CD4-positive, alpha-beta T cell (primary cell): ENCODE measurements at regions of chr15 and their contacts with region 1.

Region 1: DNA sequence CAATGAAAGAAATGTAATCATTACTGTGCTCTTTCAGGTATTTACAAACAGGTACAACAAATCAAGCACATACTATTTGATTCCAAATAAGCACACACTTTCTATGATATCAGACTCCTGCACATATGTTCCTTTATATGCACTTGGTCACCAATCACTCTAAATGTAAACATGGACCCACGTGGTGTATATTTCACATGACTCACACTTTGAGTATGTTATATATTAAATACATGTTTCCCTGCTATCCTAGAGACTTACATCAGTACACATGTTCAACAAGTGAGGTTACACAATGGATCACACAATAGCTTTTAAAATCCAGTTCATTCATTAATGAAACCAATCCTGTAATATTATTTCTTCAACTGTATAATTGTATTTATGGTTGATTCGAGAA is 683.5 kb downstream of the NR2F2 start:
- DNase-seq: no peak
- ATAC-seq: no peak
- H3K4me3 ChIP-seq: no peak overlapping the region
- H3K4me3 Mint-ChIP-seq: no peak overlapping the region
- H3K27ac ChIP-seq: no peak overlapping the region
- H3K27ac Mint-ChIP-seq: no peak overlapping the region
- H3K4me1 ChIP-seq: no peaks in the 10 kb centered on the region
- H3K4me1 Mint-ChIP-seq: no peaks in the 10 kb centered on the region
- H3K27me3 ChIP-seq: peaks cover 0 to 2% of the 10 kb centered on the region in 2 experiments
- H3K27me3 Mint-ChIP-seq: no peaks in the 10 kb centered on the region
- CTCF ChIP-seq: no peak

Region 2: DNA sequence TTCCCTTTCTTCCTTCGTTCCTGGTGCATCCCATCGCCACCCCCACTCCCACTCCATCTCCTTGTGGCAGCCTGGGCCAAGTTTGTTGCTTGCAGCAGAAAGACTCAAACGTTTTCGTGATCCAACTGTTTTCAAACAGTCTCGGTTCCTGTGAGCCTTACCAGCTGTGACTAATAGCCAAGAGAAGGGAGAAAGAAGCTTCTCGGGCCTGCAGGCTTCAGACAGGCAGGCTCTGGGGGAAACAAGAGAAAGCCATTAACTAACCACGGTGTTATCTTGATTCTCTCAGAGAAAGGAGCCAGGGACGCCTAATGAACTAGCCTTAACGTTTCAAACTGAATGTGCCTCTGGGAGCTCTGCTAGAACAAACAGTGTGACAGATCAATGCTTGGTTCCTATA is 58.5 kb after region 1 on chr15:
- CTCF ChIA-PET with region 1: no interaction called
- POLR2A ChIA-PET with region 1: no interaction called
- intact Hi-C with region 1: loop called in 1 of 2 experiments (anchors 10 kb)
- DNase-seq: no peak
- ATAC-seq: no peak
- H3K4me3 ChIP-seq: no peak overlapping the region
- H3K4me3 Mint-ChIP-seq: no peak overlapping the region
- H3K27ac ChIP-seq: no peak overlapping the region
- H3K27ac Mint-ChIP-seq: no peak overlapping the region
- H3K4me1 ChIP-seq: no peaks in the 10 kb centered on the region
- H3K4me1 Mint-ChIP-seq: no peaks in the 10 kb centered on the region
- H3K27me3 ChIP-seq: no peaks in the 10 kb centered on the region
- H3K27me3 Mint-ChIP-seq: no peaks in the 10 kb centered on the region
- CTCF ChIP-seq: no peak

Region 3: GRCh38 chr15:97129674-97130073 is 115.7 kb after region 1 on chr15:
- CTCF ChIA-PET with region 1: no interaction called
- POLR2A ChIA-PET with region 1: no interaction called
- intact Hi-C with region 1: no loop called
- DNase-seq: no peak
- ATAC-seq: no peak
- H3K4me3 ChIP-seq: no peak overlapping the region
- H3K4me3 Mint-ChIP-seq: no peak overlapping the region
- H3K27ac ChIP-seq: no peak overlapping the region
- H3K27ac Mint-ChIP-seq: no peak overlapping the region
- H3K4me1 ChIP-seq: no peaks in the 10 kb centered on the region
- H3K4me1 Mint-ChIP-seq: no peaks in the 10 kb centered on the region
- H3K27me3 ChIP-seq: no peaks in the 10 kb centered on the region
- H3K27me3 Mint-ChIP-seq: no peaks in the 10 kb centered on the region
- CTCF ChIP-seq: no peak